ENCODE measurements at regions of chr15 and their contacts with region 1.

Region 1: GRCh38 chr15:45457641-45458433 is 64.7 kb downstream of the SLC30A4 start:
- DNase-seq: peak; percentile 86 to 90
- H3K4me3 ChIP-seq: no peak overlapping the region
- CTCF ChIP-seq: peak in 2 of 3 donors; percentile 6 to 87
- POLR2A ChIP-seq: no peak

Region 2: DNA sequence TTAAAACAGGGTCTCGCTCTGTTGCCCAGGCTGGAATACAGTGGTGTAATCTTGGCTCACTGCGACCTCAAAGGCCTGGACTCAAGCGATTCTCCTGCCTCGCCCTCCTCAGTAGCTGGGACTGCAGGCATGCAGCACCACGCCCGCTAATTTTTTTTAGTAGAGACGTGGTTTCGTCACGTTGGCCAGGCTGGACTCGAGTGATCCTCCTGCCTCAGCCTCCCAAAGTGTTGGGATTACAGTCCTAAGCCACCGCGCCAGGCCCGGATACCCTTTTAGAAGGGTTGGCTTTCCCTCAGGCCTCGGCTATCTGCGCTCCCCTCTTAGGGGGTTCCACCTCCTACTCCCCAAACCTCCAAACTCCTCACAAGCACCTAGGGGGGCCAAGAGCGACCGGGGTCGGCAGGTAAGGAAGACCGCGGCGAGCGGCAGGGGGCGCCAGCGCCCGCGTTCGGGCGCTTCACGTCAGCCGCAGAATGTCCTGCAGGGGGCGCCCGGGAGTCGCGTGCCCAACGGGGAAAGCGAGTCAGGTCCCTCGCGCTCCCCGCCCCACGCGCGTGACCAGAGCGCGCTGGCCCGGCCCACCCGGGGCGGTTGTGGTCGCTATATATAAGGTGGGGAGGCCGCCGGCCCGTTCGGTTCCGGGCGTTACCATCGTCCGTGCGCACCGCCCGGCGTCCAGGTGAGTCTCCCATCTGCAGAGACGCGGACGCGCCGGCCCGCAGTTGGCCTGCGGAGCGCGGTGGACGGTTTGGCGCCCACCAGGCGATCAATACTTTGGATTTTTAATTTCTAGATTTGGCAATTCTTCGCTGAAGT is 27.7 kb before region 1 on chr15:
- intact Hi-C with region 1: loop called (anchors 2 kb)
- DNase-seq: peak; percentile 43 to 95
- H3K4me3 ChIP-seq: no peak overlapping the region
- CTCF ChIP-seq: peak in 1 of 3 donors; percentile 50
- POLR2A ChIP-seq: no peak

Region 3: DNA sequence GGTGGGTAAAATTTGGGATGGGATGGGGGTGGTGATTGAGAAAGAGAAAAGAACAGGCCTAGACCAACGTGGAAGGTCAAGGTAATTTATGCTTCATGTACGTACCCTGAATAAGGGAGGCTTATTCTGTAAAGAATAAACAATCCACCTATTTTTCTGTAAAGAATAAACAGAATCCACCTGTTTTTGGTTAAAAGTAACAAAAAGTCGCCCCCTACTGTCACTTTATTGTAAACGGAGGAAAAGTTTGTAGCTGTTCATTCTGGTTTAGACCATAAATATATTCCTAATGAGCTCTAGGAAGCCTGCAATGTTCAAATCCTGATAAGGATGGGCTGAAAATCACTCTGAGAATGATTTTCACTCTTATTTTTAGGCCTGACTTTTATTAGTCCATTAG is 153.5 kb after region 1 on chr15:
- intact Hi-C with region 1: loop called (anchors 5 kb)
- DNase-seq: no peak
- H3K4me3 ChIP-seq: no peak overlapping the region
- CTCF ChIP-seq: no peak
- POLR2A ChIP-seq: no peak

Region 4: GRCh38 chr15:45891766-45892165 is 433.9 kb after region 1 on chr15:
- intact Hi-C with region 1: no loop called
- DNase-seq: no peak
- H3K4me3 ChIP-seq: no peak overlapping the region
- CTCF ChIP-seq: no peak
- POLR2A ChIP-seq: no peak

Measured in lower leg skin (tissue), 4 donors.